GM12878 (cell line): ENCODE measurements at regions of chr5 and their contacts with region 1.

Region 1: GRCh38 chr5:35926389-35927051 is 11.9 kb downstream of the CAPSL start:
- DNase-seq: no peak
- ATAC-seq: peak; percentile 78
- H3K4me3 ChIP-seq: no peak overlapping the region
- H3K27ac ChIP-seq: no peak overlapping the region
- H3K4me1 ChIP-seq: peaks cover 4% of the 10 kb centered on the region; the same call in 1 of the 2 replicates
- H3K27me3 ChIP-seq: peaks cover 0 to 3% of the 10 kb centered on the region in 2 experiments; a peak in 2 of 4 replicates
- CTCF ChIP-seq: peak; percentile 76 to 87 (median 87)
- EP300 ChIP-seq: no peak
- POLR2A ChIP-seq: no peak
- RAD21 ChIP-seq: peak; percentile 93

Region 2: DNA sequence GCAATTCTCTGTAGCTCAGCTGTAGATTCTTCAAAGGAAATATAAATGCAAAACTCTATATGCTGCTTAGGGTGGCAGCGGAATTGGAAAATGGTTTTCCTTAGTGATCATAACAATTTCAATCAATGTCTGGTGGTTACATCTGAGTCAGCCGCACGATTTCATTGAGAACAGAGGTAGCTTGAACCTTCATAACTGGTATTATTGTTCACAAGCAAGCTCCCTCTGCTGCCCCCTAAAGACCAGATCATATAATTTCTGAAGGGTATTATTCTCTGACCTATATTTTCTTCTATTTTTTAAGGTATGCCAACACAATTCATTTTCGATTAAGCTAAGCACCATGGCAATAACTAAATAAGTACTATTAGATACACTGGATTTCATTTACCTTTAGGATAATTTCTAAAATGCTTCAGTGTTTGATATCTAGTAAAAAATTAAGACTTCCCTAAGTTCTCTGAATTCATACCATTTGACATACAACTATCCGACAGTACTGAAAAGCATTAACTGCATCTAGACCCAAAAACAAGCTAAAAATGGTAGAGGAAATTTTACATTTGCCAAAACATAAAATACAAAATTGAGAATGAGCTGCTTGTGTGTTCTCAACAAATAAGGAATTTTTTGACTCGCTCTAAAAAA is 490.0 kb before region 1 on chr5:
- CTCF ChIA-PET with region 1: interaction called, 4 read pairs
- POLR2A ChIA-PET with region 1: no interaction called
- RAD21 ChIA-PET with region 1: interaction called, 4 read pairs
- SMC1A ChIA-PET with region 1: interaction called, 3 read pairs
- in situ Hi-C with region 1: no loop called
- intact Hi-C with region 1: loop called (anchors 10 kb)
- DNase-seq: no peak
- ATAC-seq: peak; percentile 86
- H3K4me3 ChIP-seq: no peak overlapping the region
- H3K27ac ChIP-seq: no peak overlapping the region
- H3K4me1 ChIP-seq: no peaks in the 10 kb centered on the region
- H3K27me3 ChIP-seq: no peaks in the 10 kb centered on the region
- CTCF ChIP-seq: peak; percentile 42 to 50 (median 45); a peak in 4 of 6 replicates
- EP300 ChIP-seq: no peak
- POLR2A ChIP-seq: no peak
- RAD21 ChIP-seq: peak; percentile 41

Region 3: GRCh38 chr5:35657877-35658276 is 268.6 kb before region 1 on chr5:
- CTCF ChIA-PET with region 1: interaction called, 192 read pairs
- POLR2A ChIA-PET with region 1: no interaction called
- RAD21 ChIA-PET with region 1: interaction called, 98 read pairs
- SMC1A ChIA-PET with region 1: interaction called, 61 read pairs
- in situ Hi-C with region 1: loop called (anchors 5 kb)
- intact Hi-C with region 1: no loop called
- DNase-seq: no peak
- ATAC-seq: no peak
- H3K4me3 ChIP-seq: no peak overlapping the region
- H3K27ac ChIP-seq: no peak overlapping the region
- H3K4me1 ChIP-seq: no peaks in the 10 kb centered on the region
- H3K27me3 ChIP-seq: no peaks in the 10 kb centered on the region
- CTCF ChIP-seq: no peak
- EP300 ChIP-seq: no peak
- POLR2A ChIP-seq: no peak
- RAD21 ChIP-seq: no peak

Region 4: GRCh38 chr5:35785601-35786085 is 140.9 kb before region 1 on chr5:
- CTCF ChIA-PET with region 1: interaction called, 359 read pairs
- POLR2A ChIA-PET with region 1: no interaction called
- RAD21 ChIA-PET with region 1: interaction called, 128 read pairs
- SMC1A ChIA-PET with region 1: interaction called, 276 read pairs
- in situ Hi-C with region 1: no loop called
- intact Hi-C with region 1: no loop called
- DNase-seq: no peak
- ATAC-seq: no peak
- H3K4me3 ChIP-seq: no peak overlapping the region
- H3K27ac ChIP-seq: no peak overlapping the region
- H3K4me1 ChIP-seq: no peaks in the 10 kb centered on the region
- H3K27me3 ChIP-seq: no peaks in the 10 kb centered on the region
- CTCF ChIP-seq: no peak
- EP300 ChIP-seq: no peak
- POLR2A ChIP-seq: no peak
- RAD21 ChIP-seq: no peak

Region 5: GRCh38 chr5:35852084-35852734 is 74.3 kb before region 1 on chr5:
- CTCF ChIA-PET with region 1: interaction called, 9 read pairs
- POLR2A ChIA-PET with region 1: no interaction called
- RAD21 ChIA-PET with region 1: interaction called, 12 read pairs
- SMC1A ChIA-PET with region 1: interaction called, 7 read pairs
- in situ Hi-C with region 1: no loop called
- intact Hi-C with region 1: loop called (anchors 2 kb)
- DNase-seq: peak; percentile 26
- ATAC-seq: peak; percentile 65
- H3K4me3 ChIP-seq: no peak overlapping the region
- H3K27ac ChIP-seq: no peak overlapping the region
- H3K4me1 ChIP-seq: peaks cover 18% of the 10 kb centered on the region
- H3K27me3 ChIP-seq: no peaks in the 10 kb centered on the region
- CTCF ChIP-seq: peak in 2 of 3 experiments; percentile 3 to 23; a peak in 1 of 6 replicates
- EP300 ChIP-seq: peak; percentile 31 to 41; a peak in 1 of 4 replicates
- POLR2A ChIP-seq: no peak
- RAD21 ChIP-seq: no peak

Region 6: GRCh38 chr5:35938568-35939227 is 12.2 kb after region 1 on chr5 and contains the start of gene CAPSL:
- CTCF ChIA-PET with region 1: interaction called, 11 read pairs
- POLR2A ChIA-PET with region 1: no interaction called
- RAD21 ChIA-PET with region 1: interaction called, 4 read pairs
- SMC1A ChIA-PET with region 1: no interaction called
- in situ Hi-C with region 1: no loop called
- intact Hi-C with region 1: no loop called
- DNase-seq: no peak
- ATAC-seq: peak; percentile 81
- H3K4me3 ChIP-seq: no peak within 1 kb of the TSS
- H3K27ac ChIP-seq: no peak within 1 kb of the TSS
- H3K4me1 ChIP-seq: no peaks in the 10 kb centered on the region
- H3K27me3 ChIP-seq: no peaks in the 10 kb centered on the region; a peak in 1 of 4 replicates
- CTCF ChIP-seq: no peak
- EP300 ChIP-seq: no peak
- POLR2A ChIP-seq: no peak
- RAD21 ChIP-seq: no peak
- polyA plus RNA-seq, gene CAPSL: 0.20 TPM in 1 of 2 experiments, not detected in the other